ENCODE measurements at regions of chr15 and their contacts with region 1.

Region 1: GRCh38 chr15:91926908-91927270 is 73.4 kb downstream of the SLCO3A1 start:
- DNase-seq: no peak

Region 2: DNA sequence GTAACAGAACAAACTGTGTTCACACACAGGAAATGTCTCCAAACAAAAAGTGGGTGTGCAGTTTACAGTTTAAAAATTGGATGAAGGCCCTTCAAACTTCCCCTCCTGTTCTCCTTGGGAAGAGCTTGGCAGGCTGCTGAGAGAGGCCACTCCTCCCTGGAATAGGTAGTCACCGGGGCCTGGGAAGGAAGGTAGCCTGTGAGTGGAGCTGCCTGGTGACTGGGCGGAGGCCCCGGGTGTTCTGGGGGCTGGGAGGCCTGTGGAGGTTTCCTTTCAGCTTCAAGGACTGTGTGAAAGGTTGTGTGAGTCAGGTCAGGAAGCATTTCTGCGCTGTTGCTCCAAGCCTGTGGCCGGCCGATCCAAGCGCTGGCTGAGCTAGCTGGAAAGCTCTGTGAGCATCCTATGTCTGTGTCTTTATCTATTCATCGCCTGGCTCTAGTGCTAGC is 59.3 kb before region 1 on chr15:
- intact Hi-C with region 1: loop called (anchors 5 kb)
- DNase-seq: peak; percentile 88